HepG2 (cell line): ENCODE measurements at regions of chr2 and their contacts with region 1.

Region 1: GRCh38 chr2:112201696-112202430 is 53.0 kb downstream of the ZC3H8 start:
- DNase-seq: no peak
- ATAC-seq: no peak
- H3K4me3 ChIP-seq: no peak overlapping the region
- H3K27ac ChIP-seq: no peak overlapping the region
- H3K4me1 ChIP-seq: no peaks in the 10 kb centered on the region
- H3K27me3 ChIP-seq: no peaks in the 10 kb centered on the region
- CTCF ChIP-seq: no peak
- EP300 ChIP-seq: no peak
- POLR2A ChIP-seq: no peak
- RAD21 ChIP-seq: no peak

Region 2: DNA sequence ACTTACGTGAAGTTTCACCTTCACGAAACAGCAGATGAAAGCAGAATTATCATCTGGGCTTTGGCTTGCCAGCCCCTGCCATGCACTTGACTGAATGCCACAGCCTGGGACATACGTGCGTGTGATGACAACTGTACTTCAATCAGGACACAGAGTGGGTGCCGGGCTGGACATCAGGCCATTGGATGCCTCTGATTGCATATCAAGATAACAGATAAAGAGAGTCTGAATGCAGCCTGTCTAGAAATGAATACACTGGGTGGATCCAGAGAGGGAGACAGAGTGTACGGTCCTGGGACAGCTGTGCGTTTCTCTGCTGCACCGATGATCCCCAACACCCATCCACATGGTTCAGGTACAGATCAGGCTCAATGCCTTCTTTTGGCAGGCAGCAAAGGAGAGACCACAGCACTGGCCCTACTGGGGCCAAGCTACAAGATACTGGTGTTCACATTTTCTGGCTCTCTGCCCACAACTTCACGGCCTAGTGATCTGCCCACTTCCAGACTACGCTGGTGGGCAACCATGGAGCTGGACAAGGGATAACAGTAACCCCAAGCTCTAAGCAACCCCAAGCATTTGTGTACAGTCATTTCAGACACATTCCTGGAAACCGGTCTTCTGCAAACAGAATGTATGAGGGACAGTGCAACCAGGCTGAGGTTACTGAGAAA is 28.1 kb before region 1 on chr2:
- CTCF ChIA-PET with region 1: no interaction called
- POLR2A ChIA-PET with region 1: no interaction called
- in situ Hi-C with region 1: no loop called
- intact Hi-C with region 1: loop called (anchors 2 kb)
- DNase-seq: peak; percentile 13
- ATAC-seq: peak; percentile 64
- H3K4me3 ChIP-seq: peak overlapping the region in 2 of 3 experiments; percentile 8 to 19; a peak in 1 of 6 replicates
- H3K27ac ChIP-seq: no peak overlapping the region
- H3K4me1 ChIP-seq: peaks cover 43% of the 10 kb centered on the region
- H3K27me3 ChIP-seq: no peaks in the 10 kb centered on the region
- CTCF ChIP-seq: no peak
- EP300 ChIP-seq: no peak
- POLR2A ChIP-seq: no peak
- RAD21 ChIP-seq: no peak

Region 3: DNA sequence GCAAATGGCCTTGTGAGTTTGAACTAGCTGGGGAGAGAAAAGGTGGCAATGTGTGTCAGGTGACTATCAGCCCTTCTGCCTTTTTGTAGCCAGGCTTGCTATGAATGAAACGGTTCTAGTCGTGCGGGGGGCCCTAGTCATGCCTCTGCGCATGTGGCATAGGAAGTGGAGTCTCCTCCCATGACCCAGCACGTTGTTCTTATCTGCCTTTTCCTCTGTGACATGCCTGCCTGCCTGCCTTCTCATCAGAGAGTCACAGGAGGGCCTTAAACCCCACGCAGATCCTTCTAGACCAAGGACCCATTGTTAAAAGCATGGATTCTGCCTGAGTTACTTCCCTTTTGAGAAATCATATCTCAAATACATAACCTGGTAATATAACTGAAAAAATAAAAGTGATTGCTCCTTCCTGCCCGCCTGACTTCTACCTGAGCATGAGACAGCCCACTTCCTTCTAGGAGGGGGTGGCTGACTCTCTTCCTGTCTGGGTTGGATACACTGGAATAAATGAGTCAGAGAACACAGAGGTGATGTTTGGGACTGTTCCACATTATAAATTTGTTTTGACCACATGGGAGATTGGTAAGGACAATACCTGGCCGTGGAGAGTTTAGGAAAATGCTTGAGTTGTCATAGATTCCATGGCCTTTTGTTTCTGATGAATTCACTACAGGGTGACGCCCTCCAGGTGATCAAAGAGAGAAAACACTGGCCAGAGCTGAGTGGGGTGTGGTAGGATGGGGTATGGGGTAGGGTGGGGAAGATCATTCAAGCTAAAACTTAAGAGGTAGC is 13.9 kb before region 1 on chr2:
- CTCF ChIA-PET with region 1: no interaction called
- POLR2A ChIA-PET with region 1: no interaction called
- in situ Hi-C with region 1: no loop called
- intact Hi-C with region 1: no loop called
- DNase-seq: no peak
- ATAC-seq: no peak
- H3K4me3 ChIP-seq: no peak overlapping the region
- H3K27ac ChIP-seq: no peak overlapping the region
- H3K4me1 ChIP-seq: no peaks in the 10 kb centered on the region
- H3K27me3 ChIP-seq: no peaks in the 10 kb centered on the region
- CTCF ChIP-seq: no peak
- EP300 ChIP-seq: no peak
- POLR2A ChIP-seq: no peak
- RAD21 ChIP-seq: no peak

Region 4: DNA sequence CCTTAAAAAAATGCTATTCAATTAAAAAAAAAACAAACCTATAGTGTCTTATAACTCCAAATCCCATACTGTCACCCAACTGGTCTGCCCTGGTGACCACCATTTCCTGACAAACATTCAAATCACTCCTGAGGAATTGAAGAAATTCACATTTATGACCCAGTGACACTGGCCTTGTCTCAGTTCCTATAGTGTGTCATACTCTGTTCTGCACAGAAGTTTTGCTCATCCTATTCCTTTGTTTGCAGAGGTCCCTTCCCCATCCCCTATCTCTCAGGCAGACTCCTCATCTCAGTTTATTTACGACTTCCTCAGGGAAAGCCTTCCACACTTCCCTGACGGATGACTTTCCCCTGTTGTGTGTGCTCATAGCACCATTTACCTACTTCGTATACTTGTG is 88.2 kb after region 1 on chr2:
- CTCF ChIA-PET with region 1: no interaction called
- POLR2A ChIA-PET with region 1: no interaction called
- in situ Hi-C with region 1: no loop called
- intact Hi-C with region 1: no loop called
- DNase-seq: no peak
- ATAC-seq: no peak
- H3K4me3 ChIP-seq: no peak overlapping the region
- H3K27ac ChIP-seq: no peak overlapping the region
- H3K4me1 ChIP-seq: no peaks in the 10 kb centered on the region
- H3K27me3 ChIP-seq: no peaks in the 10 kb centered on the region
- CTCF ChIP-seq: no peak
- EP300 ChIP-seq: no peak
- POLR2A ChIP-seq: no peak
- RAD21 ChIP-seq: no peak